ENCODE measurements at regions of chr3 and their contacts with region 1.

Region 1: GRCh38 chr3:185942907-185943759 is 5.3 kb upstream of the TRA2B start:
- DNase-seq: peak; percentile 49
- H3K4me3 ChIP-seq: no peak overlapping the region
- H3K27ac ChIP-seq: no peak overlapping the region
- H3K27me3 ChIP-seq: peaks cover 5% of the 10 kb centered on the region
- CTCF ChIP-seq: peak; percentile 99

Region 2: GRCh38 chr3:185733980-185734724 is 209.0 kb before region 1 on chr3:
- CTCF ChIA-PET with region 1: interaction called, 28 read pairs
- POLR2A ChIA-PET with region 1: interaction called, 3 read pairs
- DNase-seq: peak; percentile 72
- H3K4me3 ChIP-seq: no peak overlapping the region
- H3K27ac ChIP-seq: no peak overlapping the region
- H3K27me3 ChIP-seq: no peaks in the 10 kb centered on the region
- CTCF ChIP-seq: peak; percentile 76

Region 3: DNA sequence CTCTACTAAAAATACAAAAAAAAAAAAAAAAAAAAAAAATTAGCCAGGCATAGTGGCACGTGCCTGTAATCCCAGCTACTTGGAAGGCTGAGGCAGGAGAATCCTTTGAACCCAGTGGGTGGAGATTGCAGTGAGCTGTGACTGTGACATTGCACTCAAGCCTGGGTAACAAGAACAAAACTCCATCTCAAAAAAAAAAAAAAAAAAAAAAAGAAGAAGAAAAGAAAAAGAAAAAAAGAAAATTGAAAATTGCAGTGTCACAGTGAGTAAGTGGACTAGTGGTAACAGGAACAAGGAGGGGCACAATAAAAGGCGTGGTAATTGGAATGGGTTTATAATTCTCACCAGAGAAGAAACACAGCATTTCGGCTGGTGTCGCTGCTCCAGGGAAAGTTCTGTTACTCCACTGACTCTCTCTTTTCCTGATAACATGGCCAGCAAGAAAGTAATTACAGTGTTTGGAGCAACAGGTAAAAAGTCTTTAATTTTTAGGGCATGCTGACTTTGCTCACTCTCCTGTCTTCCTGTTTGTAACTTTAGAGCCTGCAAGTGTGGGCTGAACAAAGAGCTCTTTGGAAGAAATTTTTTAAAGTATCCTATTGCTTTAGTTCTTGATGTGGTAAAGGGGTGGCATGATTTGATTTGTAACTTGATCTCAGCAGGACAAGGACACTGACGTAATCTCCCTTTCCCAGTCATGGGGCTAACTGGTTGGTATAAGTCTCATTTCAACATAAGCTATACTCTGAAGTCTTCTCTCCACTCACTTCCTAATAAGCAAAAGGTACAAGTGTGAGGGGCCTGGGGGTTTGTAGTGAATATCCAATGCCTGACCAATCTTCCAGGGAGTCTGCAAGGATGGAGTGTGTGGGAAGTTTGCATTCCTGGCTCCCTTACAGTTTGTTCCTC is 16.7 kb after region 1 on chr3:
- CTCF ChIA-PET with region 1: interaction called, 243 read pairs
- POLR2A ChIA-PET with region 1: interaction called, 5 read pairs
- DNase-seq: no peak
- H3K4me3 ChIP-seq: peak overlapping the region; percentile 17; the same call in 1 of the 2 replicates
- H3K27ac ChIP-seq: peak overlapping the region; percentile 68
- H3K27me3 ChIP-seq: peaks cover 3% of the 10 kb centered on the region
- CTCF ChIP-seq: no peak

Region 4: GRCh38 chr3:185976977-185977678 is 34.0 kb after region 1 on chr3:
- CTCF ChIA-PET with region 1: interaction called, 29 read pairs
- POLR2A ChIA-PET with region 1: no interaction called
- DNase-seq: peak; percentile 34
- H3K4me3 ChIP-seq: no peak overlapping the region
- H3K27ac ChIP-seq: no peak overlapping the region
- H3K27me3 ChIP-seq: no peaks in the 10 kb centered on the region
- CTCF ChIP-seq: peak; percentile 95

Region 5: GRCh38 chr3:186025161-186025560 is 82.0 kb after region 1 on chr3:
- CTCF ChIA-PET with region 1: interaction called, 11 read pairs
- POLR2A ChIA-PET with region 1: no interaction called
- DNase-seq: peak; percentile 39
- H3K4me3 ChIP-seq: no peak overlapping the region
- H3K27ac ChIP-seq: peak overlapping the region; percentile 11
- H3K27me3 ChIP-seq: peaks cover 4% of the 10 kb centered on the region
- CTCF ChIP-seq: no peak

Region 6: DNA sequence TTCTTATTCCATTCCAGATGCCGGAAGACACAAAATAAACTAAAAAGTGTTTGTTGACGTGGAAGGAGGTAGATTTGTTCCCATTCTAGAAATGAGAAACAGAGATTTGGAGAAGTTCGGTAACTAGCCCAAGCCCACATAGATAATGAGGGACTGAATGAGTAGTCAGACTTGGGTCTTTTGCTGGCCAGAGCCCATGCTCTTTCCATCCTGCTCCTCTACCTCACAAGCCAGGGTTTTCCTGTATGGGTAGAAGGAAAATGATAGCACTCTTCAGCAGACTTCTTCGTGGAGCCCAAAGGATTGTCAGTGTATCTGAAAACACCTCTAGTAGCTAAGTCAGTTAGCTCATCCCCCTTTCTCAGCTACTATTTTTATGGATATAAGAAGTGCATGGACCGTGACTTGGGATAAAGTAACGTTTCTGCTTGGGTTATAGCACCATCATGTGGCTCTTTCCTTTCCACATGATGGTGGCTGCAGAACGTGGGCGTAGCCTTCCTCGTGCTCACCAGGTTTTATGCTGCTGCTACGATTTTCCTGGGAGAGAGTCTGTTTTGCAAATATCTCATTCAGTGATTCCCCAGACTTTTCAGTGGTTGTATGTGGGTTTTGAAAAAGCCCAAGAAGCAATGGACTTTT is 334.3 kb after region 1 on chr3:
- CTCF ChIA-PET with region 1: interaction called, 38 read pairs
- POLR2A ChIA-PET with region 1: no interaction called
- DNase-seq: peak; percentile 37
- H3K4me3 ChIP-seq: no peak overlapping the region
- H3K27ac ChIP-seq: no peak overlapping the region
- H3K27me3 ChIP-seq: peaks cover 2% of the 10 kb centered on the region
- CTCF ChIP-seq: peak; percentile 64

Region 7: DNA sequence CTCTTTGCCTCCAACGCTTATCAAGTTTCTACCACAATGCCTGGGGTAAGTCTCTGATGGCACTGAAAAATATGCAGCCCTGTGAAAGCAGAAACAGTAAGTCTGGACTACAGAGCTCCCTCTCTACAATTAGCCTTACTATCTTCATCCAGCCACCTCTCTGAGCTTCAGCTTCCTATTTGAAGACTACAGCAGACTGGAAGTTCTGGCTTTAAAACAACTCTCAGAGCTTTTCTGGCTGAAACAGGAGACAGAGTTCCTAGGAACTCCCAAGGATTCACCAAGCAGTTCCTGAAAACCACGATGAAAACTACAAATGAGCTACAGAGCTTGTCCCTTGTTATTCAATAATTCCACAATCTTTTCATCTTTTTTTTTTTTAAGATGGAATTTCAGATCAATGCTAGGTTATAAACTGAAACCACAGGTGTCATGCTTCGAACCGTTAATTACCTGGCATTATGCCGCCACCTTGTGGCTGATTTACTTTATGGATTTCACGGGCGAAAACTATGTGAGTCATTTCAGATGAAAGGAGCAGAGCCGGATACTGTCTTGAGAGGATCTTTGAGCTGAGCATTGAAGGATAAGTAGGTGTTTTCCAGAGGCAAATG is 597.2 kb after region 1 on chr3:
- CTCF ChIA-PET with region 1: interaction called, 31 read pairs
- POLR2A ChIA-PET with region 1: no interaction called
- DNase-seq: peak; percentile 29
- H3K4me3 ChIP-seq: no peak overlapping the region
- H3K27ac ChIP-seq: no peak overlapping the region
- H3K27me3 ChIP-seq: no peaks in the 10 kb centered on the region
- CTCF ChIP-seq: peak; percentile 69

Measured in AG04450 (cell line).